Sigmoid colon (tissue), 7 donors: ENCODE measurements at regions of chr11 and their contacts with region 1.

Region 1: GRCh38 chr11:102410382-102410784 is 42.2 kb downstream of the TMEM123 start:
- DNase-seq: no peak
- H3K4me3 ChIP-seq: no peak overlapping the region
- H3K27ac ChIP-seq: peak overlapping the region in 2 of 4 donors; percentile 18 to 27
- H3K4me1 ChIP-seq: peaks cover 0 to 30% (median 26%) of the 10 kb centered on the region in 4 donors
- H3K27me3 ChIP-seq: no peaks in the 10 kb centered on the region
- CTCF ChIP-seq: no peak
- EP300 ChIP-seq: no peak
- POLR2A ChIP-seq: no peak

Region 2: DNA sequence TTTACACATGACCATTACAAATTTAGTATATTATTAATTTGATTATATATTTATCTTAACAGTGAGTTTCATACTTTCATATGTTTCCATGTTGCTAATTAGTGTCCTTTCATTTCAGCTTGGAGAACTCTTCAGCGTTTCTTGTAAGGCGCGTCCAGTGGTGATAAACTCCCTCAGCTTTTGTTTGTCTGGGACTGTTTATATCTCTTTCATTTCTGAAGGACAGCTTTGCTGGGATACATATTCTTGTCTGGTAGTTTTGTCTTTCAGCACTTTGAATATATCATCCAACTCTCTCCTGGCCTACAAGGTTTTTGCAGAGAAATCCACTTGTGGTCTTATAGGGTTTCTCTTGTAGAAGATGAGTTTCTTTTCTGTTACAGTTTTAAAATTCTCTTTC is 51.0 kb before region 1 on chr11:
- intact Hi-C with region 1: loop called (anchors 10 kb)
- DNase-seq: no peak
- H3K4me3 ChIP-seq: no peak overlapping the region
- H3K27ac ChIP-seq: no peak overlapping the region
- H3K4me1 ChIP-seq: peaks cover 0 to 4% (median 0%) of the 10 kb centered on the region in 4 donors
- H3K27me3 ChIP-seq: no peaks in the 10 kb centered on the region
- CTCF ChIP-seq: no peak
- EP300 ChIP-seq: no peak
- POLR2A ChIP-seq: no peak

Region 3: DNA sequence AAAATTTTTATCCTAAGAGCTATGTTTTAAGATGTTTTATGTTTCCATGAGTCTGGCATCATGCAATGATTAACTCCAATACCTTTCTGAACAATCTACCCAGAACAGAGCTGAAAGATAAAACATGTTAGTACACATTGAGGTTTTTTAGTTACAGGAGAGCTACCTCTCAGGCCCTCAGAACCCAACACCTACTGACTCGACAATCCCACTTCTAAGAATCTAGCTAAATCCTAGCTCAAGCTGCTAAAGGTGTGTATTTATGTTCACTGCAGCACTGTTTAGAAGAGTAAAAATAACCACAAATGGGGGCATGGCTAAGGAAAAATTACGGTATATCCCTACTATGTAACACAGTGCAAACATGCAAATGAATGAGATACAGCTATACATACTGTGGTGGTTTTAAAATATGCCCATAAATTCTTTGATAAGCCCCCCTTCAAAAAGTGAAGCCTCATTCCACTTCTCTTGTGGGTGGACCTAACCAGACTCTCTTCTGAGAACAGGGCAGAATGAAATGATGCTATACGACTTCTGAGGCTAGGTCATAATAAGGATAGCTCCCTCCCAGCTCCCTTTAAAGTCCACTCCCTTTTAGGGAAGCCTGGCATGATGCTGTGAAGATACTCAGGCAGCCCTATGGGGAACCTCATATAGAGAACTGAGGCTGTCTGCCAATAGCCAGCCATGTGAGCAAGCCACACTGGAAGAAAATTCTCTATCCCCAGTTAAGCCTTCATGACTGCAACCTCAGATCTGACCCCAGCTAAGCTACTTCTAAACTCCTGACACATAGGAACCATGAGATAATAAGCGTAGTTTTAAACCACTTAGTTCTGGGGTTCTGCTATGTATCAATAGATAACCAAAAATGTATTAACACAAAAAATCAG is 12.7 kb after region 1 on chr11:
- intact Hi-C with region 1: loop called (anchors 1 kb)
- DNase-seq: no peak
- H3K4me3 ChIP-seq: no peak overlapping the region
- H3K27ac ChIP-seq: peak overlapping the region in 2 of 4 donors; percentile 43 to 56
- H3K4me1 ChIP-seq: peaks cover 0 to 60% (median 37%) of the 10 kb centered on the region in 4 donors
- H3K27me3 ChIP-seq: no peaks in the 10 kb centered on the region
- CTCF ChIP-seq: no peak
- EP300 ChIP-seq: no peak
- POLR2A ChIP-seq: no peak